Calu3 (cell line): ENCODE measurements at regions of chr3 and their contacts with region 1.

Region 1: GRCh38 chr3:9846231-9846630 is 2.4 kb upstream of the RPUSD3 start:
- DNase-seq: no peak
- H3K4me3 Mint-ChIP-seq: no peak overlapping the region
- H3K27ac Mint-ChIP-seq: no peak overlapping the region
- H3K4me1 Mint-ChIP-seq: peaks cover 18% of the 10 kb centered on the region
- H3K27me3 Mint-ChIP-seq: peaks cover 2% of the 10 kb centered on the region
- CTCF ChIP-seq: no peak

Region 2: DNA sequence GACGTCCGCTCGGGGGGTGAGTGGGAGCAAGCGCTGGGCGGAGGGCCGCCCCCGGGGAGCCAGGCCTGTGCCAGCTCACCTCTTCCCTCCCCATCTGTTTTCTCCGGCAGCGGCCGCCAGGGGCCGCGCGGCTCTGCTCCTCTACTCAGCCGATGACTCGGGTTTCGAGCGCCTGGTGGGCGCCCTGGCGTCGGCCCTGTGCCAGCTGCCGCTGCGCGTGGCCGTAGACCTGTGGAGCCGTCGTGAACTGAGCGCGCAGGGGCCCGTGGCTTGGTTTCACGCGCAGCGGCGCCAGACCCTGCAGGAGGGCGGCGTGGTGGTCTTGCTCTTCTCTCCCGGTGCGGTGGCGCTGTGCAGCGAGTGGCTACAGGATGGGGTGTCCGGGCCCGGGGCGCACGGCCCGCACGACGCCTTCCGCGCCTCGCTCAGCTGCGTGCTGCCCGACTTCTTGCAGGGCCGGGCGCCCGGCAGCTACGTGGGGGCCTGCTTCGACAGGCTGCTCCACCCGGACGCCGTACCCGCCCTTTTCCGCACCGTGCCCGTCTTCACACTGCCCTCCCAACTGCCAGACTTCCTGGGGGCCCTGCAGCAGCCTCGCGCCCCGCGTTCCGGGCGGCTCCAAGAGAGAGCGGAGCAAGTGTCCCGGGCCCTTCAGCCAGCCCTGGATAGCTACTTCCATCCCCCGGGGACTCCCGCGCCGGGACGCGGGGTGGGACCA is 86.8 kb after region 1 on chr3:
- CTCF ChIA-PET with region 1: no interaction called
- intact Hi-C with region 1: loop called (anchors 5 kb)
- DNase-seq: peak; percentile 84
- H3K4me3 Mint-ChIP-seq: peak overlapping the region; percentile 93
- H3K27ac Mint-ChIP-seq: peak overlapping the region; percentile 95
- H3K4me1 Mint-ChIP-seq: peaks cover 15% of the 10 kb centered on the region
- H3K27me3 Mint-ChIP-seq: no peaks in the 10 kb centered on the region
- CTCF ChIP-seq: peak; percentile 38